ENCODE measurements at regions of chr14 and their contacts with region 1.

Region 1: DNA sequence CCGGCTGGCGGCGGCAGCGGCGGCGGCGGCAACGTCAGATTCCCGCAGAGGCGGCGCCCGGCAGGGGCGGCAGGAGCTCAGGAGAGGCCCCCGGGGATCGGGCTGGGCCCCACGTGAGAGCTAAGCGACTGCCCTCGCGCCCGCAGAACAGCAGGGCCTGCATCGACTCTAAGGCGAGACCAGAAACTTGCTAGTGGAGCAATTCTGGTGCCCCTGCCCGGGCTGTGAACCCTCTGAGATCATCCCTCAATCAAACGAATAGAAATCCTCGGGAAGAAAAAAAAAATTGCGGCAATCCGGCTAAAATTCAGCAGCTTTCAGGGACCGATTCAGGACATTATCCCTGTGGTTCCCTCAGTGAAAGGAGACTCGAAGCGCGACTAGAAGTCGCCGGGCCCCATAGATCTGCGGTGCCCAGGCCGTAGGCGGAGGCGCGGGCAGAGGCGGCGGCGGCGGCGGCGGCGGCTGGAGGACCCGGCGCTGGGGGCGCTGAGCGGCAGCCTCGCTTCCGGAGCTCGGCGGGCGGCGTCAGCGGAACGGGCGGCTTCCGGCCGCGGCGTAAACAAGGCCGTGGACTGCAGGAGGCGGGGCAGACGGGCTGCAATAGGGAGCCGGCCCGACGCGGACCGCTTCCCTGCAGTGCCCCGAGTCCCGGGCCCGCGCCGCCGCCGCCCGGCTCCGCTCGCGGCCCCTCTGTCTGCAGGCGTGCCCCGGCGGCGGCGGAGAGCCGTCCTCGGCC is at the start of gene KLHDC2:
- DNase-seq: peak; percentile 84
- H3K4me3 ChIP-seq: peak within 1 kb of the TSS; percentile 75 to 94 (median 88)
- H3K27ac ChIP-seq: peak within 1 kb of the TSS; percentile 85
- H3K4me1 ChIP-seq: peaks cover 18% of the 10 kb centered on the region
- H3K27me3 ChIP-seq: no peaks in the 10 kb centered on the region
- CTCF ChIP-seq: peak in 1 of 2 donors; percentile 2
- total RNA-seq, gene KLHDC2: 29.0 to 41.5 TPM

Region 2: GRCh38 chr14:49598485-49599300 is 169.0 kb before region 1 on chr14 and contains the start of gene LRR1:
- CTCF ChIA-PET with region 1: no interaction called
- dilution Hi-C with region 1: no loop called
- in situ Hi-C with region 1: no loop called
- intact Hi-C with region 1: loop called (anchors 5 kb)
- DNase-seq: peak; percentile 86
- H3K4me3 ChIP-seq: peak within 1 kb of the TSS; percentile 65 to 87 (median 79)
- H3K27ac ChIP-seq: peak within 1 kb of the TSS; percentile 88
- H3K4me1 ChIP-seq: peaks cover 3% of the 10 kb centered on the region
- H3K27me3 ChIP-seq: no peaks in the 10 kb centered on the region
- CTCF ChIP-seq: no peak
- total RNA-seq, gene LRR1: 8.3 to 20.7 TPM

Region 3: DNA sequence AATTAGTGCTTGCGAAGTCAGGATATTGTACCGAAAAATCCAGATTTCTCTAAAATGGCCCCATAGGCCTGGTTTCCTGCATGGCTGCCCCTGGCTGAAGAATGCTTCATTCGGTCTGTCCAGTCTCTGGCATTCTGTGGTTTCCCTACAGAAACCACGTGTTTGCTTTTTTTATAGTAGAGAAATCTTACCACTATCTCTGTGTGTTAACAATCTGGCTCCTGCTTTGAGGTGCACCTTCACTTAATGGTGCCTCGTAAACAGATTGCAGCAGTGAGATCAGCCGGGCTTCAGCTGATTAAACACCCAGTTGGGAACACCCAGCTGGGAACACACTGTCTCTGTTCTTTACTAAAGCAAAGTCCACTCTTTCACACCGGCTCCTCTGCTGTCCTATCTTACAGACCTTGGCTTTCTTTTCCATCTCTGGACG is 126.0 kb before region 1 on chr14:
- CTCF ChIA-PET with region 1: no interaction called
- dilution Hi-C with region 1: no loop called
- in situ Hi-C with region 1: loop called in 1 of 2 experiments (anchors 10 kb)
- intact Hi-C with region 1: no loop called
- DNase-seq: no peak
- H3K4me3 ChIP-seq: no peak overlapping the region
- H3K27ac ChIP-seq: no peak overlapping the region
- H3K4me1 ChIP-seq: no peaks in the 10 kb centered on the region
- H3K27me3 ChIP-seq: no peaks in the 10 kb centered on the region
- CTCF ChIP-seq: no peak

Region 4: DNA sequence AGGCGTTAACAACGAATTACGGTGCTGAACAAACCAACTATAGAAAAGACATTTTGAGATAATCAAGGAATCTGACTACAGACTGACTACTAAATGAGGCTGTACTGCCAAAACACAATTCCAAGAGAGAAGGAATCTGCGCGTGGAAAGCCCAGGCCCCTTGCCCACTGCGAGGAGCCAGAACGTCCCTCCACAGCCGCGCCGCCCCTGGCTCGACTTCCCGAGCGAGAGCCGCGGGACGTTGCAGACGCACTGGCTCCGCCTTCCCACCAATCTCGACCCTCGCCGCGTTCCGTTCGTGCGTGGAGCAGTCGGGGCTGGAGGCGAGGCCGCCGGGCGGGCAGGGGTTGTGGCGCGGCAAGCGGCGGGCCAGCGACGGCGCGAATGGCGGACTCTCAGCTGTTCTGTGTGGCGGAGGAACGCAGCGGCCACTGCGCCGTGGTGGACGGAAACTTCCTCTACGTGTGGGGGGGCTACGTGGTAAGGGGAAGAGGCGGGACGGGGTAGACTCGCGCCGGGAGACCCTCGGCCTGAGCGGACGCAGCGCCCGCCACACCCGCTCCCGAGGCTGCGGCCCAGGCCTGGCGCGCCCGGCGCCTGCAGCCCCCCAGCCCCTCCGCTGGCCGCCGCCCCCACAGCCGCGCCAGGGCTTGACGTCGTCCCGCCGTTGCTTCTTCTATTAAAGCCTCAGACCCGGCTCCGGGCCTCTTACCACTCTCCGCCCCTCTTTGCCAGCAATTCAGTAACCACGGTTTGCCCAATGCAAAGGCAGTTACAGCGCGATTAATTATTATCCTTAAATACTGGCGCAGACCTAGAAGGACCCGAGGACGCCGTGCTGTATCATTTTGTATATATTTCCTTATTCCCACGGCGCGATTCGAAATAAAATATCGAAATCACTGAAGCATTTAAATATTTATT is 74.7 kb before region 1 on chr14 and contains the start of gene KLHDC1:
- CTCF ChIA-PET with region 1: no interaction called
- dilution Hi-C with region 1: no loop called
- in situ Hi-C with region 1: no loop called
- intact Hi-C with region 1: loop called (anchors 2 kb)
- DNase-seq: peak; percentile 33
- H3K4me3 ChIP-seq: peak within 1 kb of the TSS; percentile 53 to 79 (median 66)
- H3K27ac ChIP-seq: peak within 1 kb of the TSS; percentile 10
- H3K4me1 ChIP-seq: peaks cover 10% of the 10 kb centered on the region
- H3K27me3 ChIP-seq: no peaks in the 10 kb centered on the region
- CTCF ChIP-seq: no peak
- total RNA-seq, gene KLHDC1: 0.52 to 2.0 TPM

Region 5: GRCh38 chr14:49786315-49787110 is 18.8 kb after region 1 on chr14:
- CTCF ChIA-PET with region 1: no interaction called
- dilution Hi-C with region 1: no loop called
- in situ Hi-C with region 1: no loop called
- intact Hi-C with region 1: no loop called
- DNase-seq: no peak
- H3K4me3 ChIP-seq: no peak overlapping the region
- H3K27ac ChIP-seq: no peak overlapping the region
- H3K4me1 ChIP-seq: no peaks in the 10 kb centered on the region
- H3K27me3 ChIP-seq: no peaks in the 10 kb centered on the region
- CTCF ChIP-seq: no peak

Measured in mammary epithelial cell (primary cell).